ENCODE measurements at regions of chr4 and their contacts with region 1.

Region 1: DNA sequence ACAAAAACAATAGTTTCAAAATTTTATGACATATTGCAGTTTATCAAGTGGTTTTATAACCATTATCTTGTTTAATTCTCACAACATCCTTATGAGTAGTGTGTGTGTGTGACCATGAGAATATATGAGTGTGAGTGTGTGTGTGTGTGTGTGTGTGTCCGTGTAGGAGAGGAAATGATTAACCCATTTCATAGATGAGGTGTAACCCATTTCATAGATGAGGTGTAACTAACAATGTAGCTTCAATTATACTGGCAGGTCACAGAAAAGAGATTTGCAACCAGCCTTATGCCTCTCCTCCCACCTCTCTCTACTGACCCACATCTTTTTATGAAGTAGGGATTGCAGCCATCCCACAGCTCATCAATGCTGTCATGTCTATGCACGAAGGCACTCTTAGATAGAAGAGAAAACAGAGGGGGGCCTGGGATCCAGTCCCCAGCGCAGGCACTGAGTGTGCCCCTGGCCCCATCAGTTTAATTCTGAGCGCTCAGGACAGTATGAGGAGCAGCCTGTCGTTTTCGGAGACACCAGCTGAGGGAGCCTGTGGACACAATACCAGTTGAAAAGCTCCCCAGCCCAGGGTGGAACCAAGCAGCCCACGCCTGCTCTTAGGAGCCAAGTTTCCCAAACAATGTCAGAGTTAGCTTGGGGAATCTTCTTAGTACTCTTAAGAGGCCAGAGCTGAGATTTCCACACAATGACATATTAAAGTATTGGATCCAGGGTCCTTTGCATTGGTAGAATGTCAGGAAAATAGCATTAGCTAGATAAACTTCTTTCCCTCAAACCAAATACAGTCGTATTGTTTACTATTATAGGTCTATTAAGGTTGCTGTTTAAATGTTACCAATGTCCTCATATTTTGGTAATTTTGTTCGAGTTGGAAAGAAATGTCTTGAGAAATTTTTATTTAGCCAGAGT is 88.6 kb downstream of the PALLD start:
- DNase-seq: peak in 1 of 2 experiments; percentile 60
- H3K4me3 ChIP-seq: no peak overlapping the region
- H3K27ac ChIP-seq: peak overlapping the region; percentile 98
- H3K4me1 ChIP-seq: peaks cover 54% of the 10 kb centered on the region
- H3K27me3 ChIP-seq: no peaks in the 10 kb centered on the region
- CTCF ChIP-seq: peak; percentile 37; the same call in 1 of the 2 replicates

Region 2: DNA sequence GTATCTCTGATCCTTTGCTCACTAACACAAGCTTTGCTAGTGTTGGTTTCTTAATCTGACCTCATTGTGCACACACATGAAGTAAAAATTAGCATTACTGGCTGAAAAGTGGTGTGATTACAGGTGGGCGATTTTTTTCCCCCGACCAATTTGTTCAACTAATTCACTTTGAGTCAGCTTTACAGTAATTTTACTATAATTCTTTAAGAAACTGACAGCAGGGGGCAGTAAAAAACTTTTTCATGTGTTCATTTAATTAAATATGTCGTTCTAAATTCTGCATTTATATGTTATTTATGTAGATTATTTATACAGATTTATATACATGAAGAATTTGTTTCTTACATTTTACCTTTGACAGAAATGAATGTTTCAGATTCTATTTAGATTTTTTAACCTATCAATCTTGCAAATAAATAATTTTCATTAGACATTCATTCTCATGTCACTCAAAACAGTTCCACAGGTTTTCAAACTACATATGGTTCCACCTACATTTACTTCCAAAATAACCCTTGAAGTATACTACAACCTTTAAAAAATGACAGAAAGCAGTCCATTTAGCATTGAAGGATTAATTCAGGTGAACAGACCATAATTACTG is 71.1 kb before region 1 on chr4:
- CTCF ChIA-PET with region 1: interaction called, 3 read pairs
- POLR2A ChIA-PET with region 1: interaction called, 4 read pairs
- intact Hi-C with region 1: loop called (anchors 1 kb)
- DNase-seq: peak in 1 of 2 experiments; percentile 43
- H3K4me3 ChIP-seq: no peak overlapping the region
- H3K27ac ChIP-seq: no peak overlapping the region
- H3K4me1 ChIP-seq: no peaks in the 10 kb centered on the region
- H3K27me3 ChIP-seq: no peaks in the 10 kb centered on the region
- CTCF ChIP-seq: peak; percentile 67

Region 3: GRCh38 chr4:168618577-168619265 is 33.3 kb after region 1 on chr4:
- CTCF ChIA-PET with region 1: interaction called, 9 read pairs
- POLR2A ChIA-PET with region 1: interaction called, 10 read pairs
- intact Hi-C with region 1: loop called (anchors 1 kb)
- DNase-seq: peak; percentile 64 to 82
- H3K4me3 ChIP-seq: no peak overlapping the region
- H3K27ac ChIP-seq: peak overlapping the region; percentile 55
- H3K4me1 ChIP-seq: peaks cover 18% of the 10 kb centered on the region
- H3K27me3 ChIP-seq: no peaks in the 10 kb centered on the region
- CTCF ChIP-seq: no peak

Region 4: DNA sequence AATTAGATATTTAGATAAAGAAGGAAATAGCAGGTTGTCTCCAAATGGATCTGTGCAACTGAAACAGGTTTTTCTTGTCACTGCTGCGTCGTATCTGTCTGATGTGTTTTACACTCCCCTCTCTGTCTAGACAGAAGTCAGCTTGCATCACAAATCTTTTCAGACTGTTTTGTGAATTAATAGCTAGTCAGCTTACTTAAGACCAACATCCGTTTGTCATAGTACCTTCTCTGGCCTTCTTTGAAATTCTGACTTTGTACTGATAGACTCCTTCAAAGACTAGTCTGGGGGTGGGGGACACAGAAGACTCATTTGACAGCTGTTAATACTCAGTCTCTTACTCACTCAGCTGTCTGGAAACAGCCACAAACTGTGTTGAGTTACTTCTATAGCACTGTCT is 109.2 kb after region 1 on chr4:
- CTCF ChIA-PET with region 1: no interaction called
- POLR2A ChIA-PET with region 1: no interaction called
- intact Hi-C with region 1: loop called (anchors 5 kb)
- DNase-seq: peak in 1 of 2 experiments; percentile 60
- H3K4me3 ChIP-seq: no peak overlapping the region
- H3K27ac ChIP-seq: peak overlapping the region; percentile 37
- H3K4me1 ChIP-seq: peaks cover 13% of the 10 kb centered on the region
- H3K27me3 ChIP-seq: no peaks in the 10 kb centered on the region
- CTCF ChIP-seq: no peak

Region 5: DNA sequence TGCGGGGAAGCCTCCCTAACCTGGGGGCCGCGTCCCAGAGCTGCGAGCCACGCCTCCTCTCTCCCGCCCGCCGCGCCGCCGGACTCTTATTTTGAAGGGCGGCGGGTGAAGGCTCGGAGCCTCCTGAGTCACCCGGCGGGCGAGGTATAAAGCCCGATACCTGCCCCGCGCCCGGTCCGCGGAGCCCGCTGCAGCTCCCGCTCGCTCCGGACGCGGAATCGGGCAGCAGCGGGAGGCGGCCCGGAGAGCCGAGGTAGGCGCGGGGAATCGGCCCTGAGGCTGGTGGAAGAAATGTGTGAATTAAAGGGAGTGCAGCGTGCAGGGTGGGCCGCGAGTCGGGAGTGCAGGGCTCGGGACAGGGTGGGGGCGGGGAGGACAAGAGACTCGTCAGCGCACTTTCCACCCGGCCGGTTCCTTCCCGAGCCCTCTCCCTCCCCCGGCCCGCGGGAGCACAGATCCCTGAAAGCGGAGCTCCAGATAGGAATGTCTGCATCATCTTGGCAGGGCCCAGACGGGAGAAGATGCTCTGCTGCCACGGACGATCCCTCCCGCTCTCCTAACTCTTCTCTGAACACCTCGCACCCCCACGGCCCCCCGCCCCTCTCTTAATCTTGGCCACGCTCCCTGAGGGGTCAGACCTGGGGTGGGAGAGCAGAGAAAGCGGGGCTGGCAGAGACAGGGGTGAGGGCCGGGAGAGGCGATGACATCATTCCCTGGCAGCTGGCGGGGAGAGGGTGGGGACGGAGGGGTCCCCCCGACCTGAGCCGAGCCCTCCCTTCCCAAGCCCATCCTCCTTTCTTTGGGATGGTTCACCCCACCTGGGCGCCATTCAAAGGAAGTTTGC is 246.7 kb after region 1 on chr4:
- CTCF ChIA-PET with region 1: no interaction called
- POLR2A ChIA-PET with region 1: no interaction called
- intact Hi-C with region 1: loop called (anchors 2 kb)
- DNase-seq: peak; percentile 55 to 83
- H3K4me3 ChIP-seq: peak overlapping the region; percentile 78
- H3K27ac ChIP-seq: 0 out of 2 replicates have a peak overlapping the region, but pooled peaks have one; percentile 37
- H3K4me1 ChIP-seq: peaks cover 8% of the 10 kb centered on the region; the same call in 1 of the 2 replicates
- H3K27me3 ChIP-seq: no peaks in the 10 kb centered on the region
- CTCF ChIP-seq: no peak

Measured in PC-9 (cell line).